Activated T-helper 1 cell treated with anti-CD3 and anti-CD28 coated beads, Interleukin-12 subunit alpha, Interleukin-12 subunit beta, Interleukin-2, Interleukin-4 antibody, amounts not matched to agents 30 ng/mL and 10 ng/mL and 1 ng/mL, durations not matched to agents 14 hours and 24 hours and 36 hours (primary cell): ENCODE measurements at regions of chr13 and their contacts with region 1.

Region 1: DNA sequence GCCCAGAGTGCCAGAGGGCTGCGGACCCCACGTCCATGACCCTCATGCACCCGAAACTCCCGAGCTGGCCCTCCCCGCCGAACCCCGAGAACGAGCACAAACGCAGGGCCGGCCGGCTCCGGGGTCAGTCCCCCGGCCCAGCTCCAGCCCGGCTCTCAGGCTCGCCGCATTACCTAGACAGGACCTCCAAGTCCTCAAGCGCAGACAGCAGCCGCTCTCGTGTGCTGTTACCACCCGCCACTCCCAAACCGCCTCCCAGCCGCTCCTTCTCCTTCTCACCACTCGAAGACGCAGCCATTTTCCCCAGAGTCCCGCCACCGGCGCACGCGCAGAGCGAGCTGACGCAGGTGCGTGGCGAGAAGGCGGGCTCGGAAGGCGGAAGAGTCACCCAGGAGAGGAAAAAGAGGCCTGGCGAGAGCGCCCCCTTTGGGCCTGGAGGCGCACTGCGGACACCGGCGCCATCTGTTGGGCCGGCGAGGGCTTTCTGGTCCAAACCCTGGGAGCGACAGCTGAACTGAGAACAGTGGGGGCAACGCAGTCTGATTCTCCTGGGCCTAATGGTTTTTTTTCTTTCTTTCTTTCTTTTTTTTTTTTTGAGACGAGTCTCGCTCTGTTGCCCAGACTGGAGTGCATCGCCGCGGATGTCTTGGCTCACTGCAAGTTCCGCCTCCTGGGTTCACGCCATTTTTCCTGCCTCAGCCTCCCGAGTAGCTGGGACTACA is at the start of gene MED4:
- DNase-seq: peak; percentile 98
- H3K4me3 Mint-ChIP-seq: peak within 1 kb of the TSS; percentile 98
- H3K27ac Mint-ChIP-seq: peak within 1 kb of the TSS; percentile 90
- H3K4me1 Mint-ChIP-seq: peaks cover 36% of the 10 kb centered on the region
- H3K27me3 Mint-ChIP-seq: peaks cover 5% of the 10 kb centered on the region
- total RNA-seq, gene MED4: 64.2 and 65.6 TPM in 2 replicates

Region 2: GRCh38 chr13:48000778-48001628 is 93.9 kb before region 1 on chr13 and contains the start of gene SUCLA2:
- intact Hi-C with region 1: loop called (anchors 1 kb)
- DNase-seq: peak; percentile 93
- H3K4me3 Mint-ChIP-seq: peak within 1 kb of the TSS; percentile 95
- H3K27ac Mint-ChIP-seq: peak within 1 kb of the TSS; percentile 97
- H3K4me1 Mint-ChIP-seq: peaks cover 31% of the 10 kb centered on the region
- H3K27me3 Mint-ChIP-seq: peaks cover 2% of the 10 kb centered on the region
- total RNA-seq, gene SUCLA2: 40.4 and 45.3 TPM in 2 replicates

Region 3: GRCh38 chr13:48110132-48110868 is 15.4 kb after region 1 on chr13:
- intact Hi-C with region 1: no loop called
- DNase-seq: no peak
- H3K4me3 Mint-ChIP-seq: no peak overlapping the region
- H3K27ac Mint-ChIP-seq: no peak overlapping the region
- H3K4me1 Mint-ChIP-seq: peaks cover 5% of the 10 kb centered on the region
- H3K27me3 Mint-ChIP-seq: peaks cover 2% of the 10 kb centered on the region